WTC11 (cell line): ENCODE measurements at regions of chr14 and their contacts with region 1.

Region 1: GRCh38 chr14:81990312-81990761 is 456.7 kb upstream of the SEL1L start:
- DNase-seq: peak; percentile 46
- ATAC-seq: peak; percentile 64; the same call in 1 of the 2 replicates
- H3K4me3 Mint-ChIP-seq: no peak overlapping the region
- H3K27ac Mint-ChIP-seq: no peak overlapping the region
- H3K4me1 Mint-ChIP-seq: no peaks in the 10 kb centered on the region
- H3K27me3 Mint-ChIP-seq: no peaks in the 10 kb centered on the region
- CTCF ChIP-seq: peak; percentile 73

Region 2: DNA sequence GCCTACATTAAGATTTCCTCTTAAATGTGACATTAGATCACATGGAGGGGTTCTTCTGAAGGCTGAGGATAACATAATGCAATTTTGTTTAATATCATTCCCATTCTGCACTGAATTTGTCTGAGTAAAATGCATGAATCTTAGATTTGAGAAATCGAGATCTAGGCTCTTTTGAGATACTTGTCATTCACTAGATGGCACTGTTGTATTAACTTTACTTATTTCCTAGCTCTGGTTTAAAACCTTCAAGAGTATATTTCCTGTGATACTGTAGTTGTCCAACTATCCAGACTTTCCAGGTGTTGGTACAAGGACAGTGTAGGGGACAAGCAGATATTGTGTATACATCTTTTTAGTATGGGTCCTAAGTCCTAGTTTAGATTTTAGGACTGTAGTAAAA is 365.0 kb before region 1 on chr14:
- CTCF ChIA-PET with region 1: interaction called, 14 read pairs
- POLR2A ChIA-PET with region 1: no interaction called
- DNase-seq: no peak
- ATAC-seq: peak; percentile 56
- H3K4me3 Mint-ChIP-seq: no peak overlapping the region
- H3K27ac Mint-ChIP-seq: no peak overlapping the region
- H3K4me1 Mint-ChIP-seq: no peaks in the 10 kb centered on the region
- H3K27me3 Mint-ChIP-seq: no peaks in the 10 kb centered on the region
- CTCF ChIP-seq: no peak

Region 3: DNA sequence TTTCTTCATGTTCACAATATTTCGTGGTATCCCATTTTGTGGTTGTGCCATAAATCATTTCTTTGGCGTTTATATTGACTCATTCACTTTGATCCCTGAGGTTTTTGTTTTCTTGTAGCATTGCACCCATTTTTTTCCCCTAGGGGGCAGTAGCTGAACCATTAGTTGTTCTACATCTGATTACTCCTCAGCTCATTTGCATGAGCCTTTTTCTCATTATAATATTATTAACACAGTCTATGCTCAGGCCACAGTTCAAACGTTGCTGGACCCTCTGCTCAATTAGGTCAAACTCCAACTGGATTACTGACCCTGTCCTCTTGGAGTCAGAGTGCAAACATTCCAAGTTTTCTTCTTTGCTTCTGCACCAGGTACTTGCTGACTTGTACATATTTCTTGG is 18.7 kb after region 1 on chr14:
- CTCF ChIA-PET with region 1: interaction called, 11 read pairs
- POLR2A ChIA-PET with region 1: no interaction called
- DNase-seq: no peak
- ATAC-seq: peak; percentile 61; the same call in 1 of the 2 replicates
- H3K4me3 Mint-ChIP-seq: no peak overlapping the region
- H3K27ac Mint-ChIP-seq: no peak overlapping the region
- H3K4me1 Mint-ChIP-seq: no peaks in the 10 kb centered on the region
- H3K27me3 Mint-ChIP-seq: no peaks in the 10 kb centered on the region
- CTCF ChIP-seq: peak; percentile 46

Region 4: DNA sequence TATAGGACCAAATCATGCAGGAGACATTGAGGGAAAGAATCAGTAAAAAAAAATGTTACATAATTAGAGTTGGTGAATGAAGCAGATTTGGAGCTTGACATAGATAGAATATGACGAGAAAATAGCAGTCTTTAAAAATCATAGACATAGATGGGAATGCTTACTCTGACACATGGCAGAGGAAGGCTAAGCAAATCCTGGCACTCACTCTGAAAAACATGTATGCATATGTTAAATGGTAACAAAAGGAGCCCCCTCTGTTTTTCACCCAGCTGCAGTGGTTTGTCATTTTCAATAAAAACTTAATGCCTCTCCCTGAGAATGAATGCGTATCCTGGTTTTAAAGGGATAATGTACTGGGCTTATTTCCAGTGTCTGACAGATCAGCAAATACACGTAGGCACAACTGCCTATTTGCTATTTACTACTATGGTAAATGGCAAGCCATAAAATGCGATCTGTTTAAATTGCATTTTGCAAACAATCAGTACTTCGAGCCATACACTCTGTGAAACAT is 104.5 kb after region 1 on chr14:
- CTCF ChIA-PET with region 1: no interaction called
- POLR2A ChIA-PET with region 1: no interaction called
- DNase-seq: no peak
- ATAC-seq: no peak
- H3K4me3 Mint-ChIP-seq: no peak overlapping the region
- H3K27ac Mint-ChIP-seq: no peak overlapping the region
- H3K4me1 Mint-ChIP-seq: peaks cover 11% of the 10 kb centered on the region
- H3K27me3 Mint-ChIP-seq: no peaks in the 10 kb centered on the region
- CTCF ChIP-seq: no peak